AG04450 (cell line): ENCODE measurements at regions of chr3 and their contacts with region 1.

Region 1: GRCh38 chr3:48400824-48401433 is 28.9 kb downstream of the FBXW12 start:
- DNase-seq: no peak
- H3K4me3 ChIP-seq: no peak overlapping the region
- H3K27ac ChIP-seq: no peak overlapping the region
- H3K27me3 ChIP-seq: no peaks in the 10 kb centered on the region
- CTCF ChIP-seq: peak; percentile 75

Region 2: GRCh38 chr3:48151058-48151806 is 249.7 kb before region 1 on chr3:
- CTCF ChIA-PET with region 1: no interaction called
- POLR2A ChIA-PET with region 1: no interaction called
- DNase-seq: peak; percentile 66
- H3K4me3 ChIP-seq: no peak overlapping the region
- H3K27ac ChIP-seq: no peak overlapping the region
- H3K27me3 ChIP-seq: no peaks in the 10 kb centered on the region
- CTCF ChIP-seq: peak; percentile 82

Region 3: GRCh38 chr3:48194446-48195071 is 206.4 kb before region 1 on chr3:
- CTCF ChIA-PET with region 1: interaction called, 12 read pairs
- POLR2A ChIA-PET with region 1: no interaction called
- DNase-seq: no peak
- H3K4me3 ChIP-seq: no peak overlapping the region
- H3K27ac ChIP-seq: no peak overlapping the region
- H3K27me3 ChIP-seq: no peaks in the 10 kb centered on the region
- CTCF ChIP-seq: peak; percentile 86

Region 4: GRCh38 chr3:48388966-48389365 is 12.0 kb before region 1 on chr3:
- CTCF ChIA-PET with region 1: interaction called, 17 read pairs
- POLR2A ChIA-PET with region 1: no interaction called
- DNase-seq: no peak
- H3K4me3 ChIP-seq: no peak overlapping the region
- H3K27ac ChIP-seq: no peak overlapping the region
- H3K27me3 ChIP-seq: peaks cover 26% of the 10 kb centered on the region
- CTCF ChIP-seq: no peak

Region 5: GRCh38 chr3:48422270-48422669 is 21.3 kb after region 1 on chr3:
- CTCF ChIA-PET with region 1: interaction called, 11 read pairs
- POLR2A ChIA-PET with region 1: no interaction called
- DNase-seq: no peak
- H3K4me3 ChIP-seq: no peak overlapping the region
- H3K27ac ChIP-seq: no peak overlapping the region
- H3K27me3 ChIP-seq: no peaks in the 10 kb centered on the region
- CTCF ChIP-seq: no peak

Region 6: GRCh38 chr3:48548729-48549705 is 148.1 kb after region 1 on chr3:
- CTCF ChIA-PET with region 1: interaction called, 15 read pairs
- POLR2A ChIA-PET with region 1: no interaction called
- DNase-seq: no peak
- H3K4me3 ChIP-seq: no peak overlapping the region
- H3K27ac ChIP-seq: no peak overlapping the region
- H3K27me3 ChIP-seq: no peaks in the 10 kb centered on the region
- CTCF ChIP-seq: peak; percentile 97